Dorsolateral prefrontal cortex (tissue), 120 donors: ENCODE measurements at regions of chr12 and their contacts with region 1.

Region 1: GRCh38 chr12:123580772-123581171 is 3.6 kb upstream of the TMED2 start:
- DNase-seq: no peak
- H3K4me3 ChIP-seq: no peak overlapping the region
- H3K27ac ChIP-seq: peak overlapping the region in 1 of 59 donors; percentile 3
- H3K27me3 ChIP-seq: no peaks in the 10 kb centered on the region
- CTCF ChIP-seq: no peak

Region 2: GRCh38 chr12:123271001-123271729 is 309.6 kb before region 1 on chr12:
- intact Hi-C with region 1: loop called in 1 of 2 experiments (anchors 2 kb)
- DNase-seq: peak in 9 of 10 donors; percentile 56 to 83 (median 68)
- H3K4me3 ChIP-seq: peak overlapping the region; percentile 50 to 87 (median 73)
- H3K27ac ChIP-seq: peak overlapping the region in 56 of 59 donors; percentile 88 to 99 (median 98)
- H3K27me3 ChIP-seq: no peaks in the 10 kb centered on the region
- CTCF ChIP-seq: peak in 39 of 56 donors; percentile 5 to 74 (median 47)

Region 3: GRCh38 chr12:123457980-123458783 is 122.6 kb before region 1 on chr12 and contains the start of gene SNRNP35:
- intact Hi-C with region 1: loop called (anchors 5 kb)
- DNase-seq: peak; percentile 65 to 83 (median 77)
- H3K4me3 ChIP-seq: peak within 1 kb of the TSS; percentile 63 to 97 (median 83)
- H3K27ac ChIP-seq: peak within 1 kb of the TSS; percentile 94 to 100 (median 99)
- H3K27me3 ChIP-seq: no peaks in the 10 kb centered on the region
- CTCF ChIP-seq: peak in 13 of 56 donors; percentile 2 to 38 (median 11)
- total RNA-seq, gene SNRNP35: 18.2 to 41.5 (median 27.9) TPM

Region 4: DNA sequence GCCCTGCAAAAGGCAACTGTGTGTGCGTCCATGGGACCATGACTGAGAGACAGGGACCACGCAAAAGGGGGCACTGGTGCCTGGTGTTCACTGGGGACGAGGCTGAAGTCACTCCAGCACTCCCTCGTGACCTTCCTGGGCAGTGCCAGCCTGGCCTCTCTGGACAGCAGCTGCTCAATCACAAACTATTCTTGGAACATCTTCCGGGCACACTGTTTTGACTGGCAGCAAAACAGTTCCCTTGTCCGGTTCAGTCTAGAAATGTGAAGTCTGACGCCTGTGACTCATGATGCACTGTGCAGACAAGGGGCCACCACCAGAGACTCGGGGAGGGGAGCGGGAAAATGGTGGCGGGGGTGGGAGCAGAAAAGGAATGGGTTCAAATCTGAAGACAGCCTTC is 102.0 kb before region 1 on chr12:
- intact Hi-C with region 1: loop called in 1 of 2 experiments (anchors 5 kb)
- DNase-seq: peak; percentile 14 to 90 (median 84)
- H3K4me3 ChIP-seq: peak overlapping the region in 53 of 59 donors; percentile 8 to 65 (median 37)
- H3K27ac ChIP-seq: peak overlapping the region; percentile 91 to 100 (median 99)
- H3K27me3 ChIP-seq: no peaks in the 10 kb centered on the region
- CTCF ChIP-seq: peak in 4 of 56 donors; percentile 6 to 17 (median 16)

Region 5: GRCh38 chr12:123533672-123534643 is 46.8 kb before region 1 on chr12 and contains the start of gene RILPL1:
- intact Hi-C with region 1: loop called in 1 of 2 experiments (anchors 5 kb)
- DNase-seq: peak; percentile 36 to 78 (median 46)
- H3K4me3 ChIP-seq: peak within 1 kb of the TSS; percentile 68 to 94 (median 81)
- H3K27ac ChIP-seq: peak within 1 kb of the TSS; percentile 58 to 97 (median 94)
- H3K27me3 ChIP-seq: no peaks in the 10 kb centered on the region
- CTCF ChIP-seq: peak in 47 of 56 donors; percentile 1 to 71 (median 34)
- total RNA-seq, gene RILPL1: 26.8 to 64.9 (median 37.5) TPM

Region 6: DNA sequence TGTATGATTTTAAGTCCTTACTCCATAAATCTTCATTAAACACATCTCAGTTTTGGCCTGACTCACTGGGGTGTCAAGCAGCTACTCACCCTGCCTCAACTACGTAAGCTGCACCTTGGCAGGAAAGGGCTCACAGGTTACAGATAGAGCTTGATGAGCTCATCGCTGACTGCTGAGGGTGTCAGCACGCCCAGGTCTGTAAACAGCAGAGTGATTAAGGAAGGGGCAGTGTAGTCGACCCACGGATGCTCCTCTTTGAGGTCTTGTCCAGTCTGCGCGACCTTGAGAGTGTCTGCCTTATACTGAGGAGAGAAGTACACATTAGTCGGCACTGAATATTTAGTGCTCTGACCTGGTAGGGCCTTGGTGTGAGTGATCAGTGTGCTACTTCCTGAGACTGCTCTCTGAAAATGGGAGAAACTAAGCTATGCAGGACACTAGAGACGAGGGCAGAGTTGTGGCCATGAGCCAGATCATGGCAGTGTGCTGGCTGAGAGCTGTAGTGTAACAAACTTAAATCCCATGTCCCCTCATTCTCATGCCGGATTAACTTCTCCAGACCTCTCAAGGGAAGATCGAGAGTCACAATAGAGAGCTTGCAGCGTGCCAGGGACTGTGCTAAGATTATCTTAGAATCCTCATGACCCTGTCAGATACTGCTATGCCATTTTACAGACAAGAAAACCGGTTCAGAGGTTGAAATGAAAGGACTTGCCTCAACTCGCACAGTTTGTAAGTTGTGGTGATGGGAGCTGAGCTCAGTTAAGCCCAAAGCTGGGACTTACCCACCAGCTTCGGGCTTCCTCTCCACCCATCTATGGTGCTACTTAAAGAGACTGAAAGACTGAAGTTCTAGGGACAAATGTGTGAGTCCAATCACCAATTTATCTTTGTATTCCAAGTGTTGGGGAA is 41.1 kb after region 1 on chr12:
- intact Hi-C with region 1: no loop called
- DNase-seq: no peak
- H3K4me3 ChIP-seq: no peak overlapping the region
- H3K27ac ChIP-seq: no peak overlapping the region
- H3K27me3 ChIP-seq: no peaks in the 10 kb centered on the region
- CTCF ChIP-seq: no peak

Region 7: GRCh38 chr12:123633379-123634141 is 52.8 kb after region 1 on chr12 and contains the starts of genes EIF2B1 and GTF2H3:
- intact Hi-C with region 1: loop called (anchors 1 to 5 kb)
- DNase-seq: peak; percentile 95 to 99 (median 97)
- H3K4me3 ChIP-seq: peak within 1 kb of the TSS; percentile 57 to 100 (median 93)
- H3K27ac ChIP-seq: peak within 1 kb of the TSS; percentile 26 to 93 (median 77)
- H3K27me3 ChIP-seq: no peaks in the 10 kb centered on the region
- CTCF ChIP-seq: peak in 33 of 56 donors; percentile 6 to 55 (median 30)
- total RNA-seq, gene EIF2B1: 31.4 to 56.3 (median 43.6) TPM
- total RNA-seq, gene GTF2H3: 18.5 to 41.9 (median 28.2) TPM

Region 8: DNA sequence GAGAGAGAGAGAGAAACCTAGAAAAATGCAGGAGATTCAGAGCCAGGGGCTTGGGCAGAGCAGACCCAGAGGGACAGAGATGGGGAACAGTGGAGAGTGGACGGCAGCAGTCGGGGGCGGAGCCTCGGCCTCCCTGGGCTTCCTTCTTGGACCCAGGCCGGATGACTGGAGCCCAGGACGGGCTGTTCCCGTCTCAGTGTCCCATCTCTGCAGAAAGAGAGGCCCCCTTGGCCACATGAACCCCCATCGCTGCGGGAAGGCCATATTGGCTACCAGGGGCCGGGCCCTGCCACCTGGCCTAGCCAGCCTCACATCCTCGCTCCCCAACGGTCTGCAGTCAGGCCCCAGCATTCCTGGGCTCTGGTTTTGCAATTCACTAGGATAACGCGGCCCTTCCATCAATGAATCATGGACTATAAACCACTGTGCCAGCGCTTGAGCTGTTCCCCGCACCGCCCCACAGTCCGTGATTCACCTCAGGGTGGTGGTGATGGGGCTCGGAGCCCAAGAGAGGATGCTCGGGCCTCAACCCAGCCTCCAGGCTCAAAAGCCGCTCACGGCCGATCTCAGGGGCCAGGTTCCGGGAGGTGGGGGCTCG is 830.6 kb after region 1 on chr12:
- intact Hi-C with region 1: no loop called
- DNase-seq: peak in 4 of 10 donors; percentile 49 to 85 (median 58)
- H3K4me3 ChIP-seq: peak overlapping the region in 1 of 59 donors; percentile 32
- H3K27ac ChIP-seq: peak overlapping the region in 53 of 59 donors; percentile 0 to 85 (median 69)
- H3K27me3 ChIP-seq: no peaks in the 10 kb centered on the region
- CTCF ChIP-seq: no peak